MCF 10A (cell line): ENCODE measurements at regions of chr3 and their contacts with region 1.

Region 1: DNA sequence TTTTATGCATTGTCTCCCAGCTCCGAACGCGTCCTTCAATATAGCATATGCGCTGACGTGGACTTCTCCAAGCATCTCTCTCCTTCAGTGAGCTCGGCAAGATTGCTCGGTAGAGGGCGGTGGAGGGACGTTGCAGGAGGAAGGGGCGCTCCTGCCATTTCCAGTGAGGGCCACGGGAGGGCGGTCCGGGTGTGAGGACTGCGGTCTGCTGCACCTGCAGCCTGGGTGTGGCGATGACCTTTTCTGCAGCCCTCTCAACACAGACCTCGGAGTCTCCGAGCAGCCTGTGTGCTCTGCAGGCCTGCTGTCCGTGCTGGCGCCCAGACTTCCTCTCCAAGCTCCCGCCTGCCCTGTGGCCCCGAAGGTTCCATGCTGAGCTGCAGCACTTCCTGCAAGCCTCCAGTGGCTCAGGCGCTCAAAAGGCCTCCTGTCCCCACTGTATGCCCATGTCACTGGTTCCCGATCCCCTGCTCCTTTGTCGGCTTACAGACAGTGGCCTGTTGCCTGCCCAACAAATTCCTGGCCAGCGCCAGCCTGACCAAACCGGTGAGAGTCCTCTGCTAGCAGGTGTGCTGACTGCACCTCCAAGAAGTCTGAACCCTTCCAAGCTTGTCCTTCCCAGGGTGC is 8.9 kb upstream of the RTP3 start:
- DNase-seq: peak; percentile 91
- H3K4me3 Mint-ChIP-seq: no peak overlapping the region
- H3K27ac Mint-ChIP-seq: no peak overlapping the region
- H3K4me1 Mint-ChIP-seq: peaks cover 19% of the 10 kb centered on the region
- H3K27me3 Mint-ChIP-seq: no peaks in the 10 kb centered on the region
- CTCF ChIP-seq: peak; percentile 99

Region 2: GRCh38 chr3:46478341-46478740 is 10.5 kb before region 1 on chr3:
- CTCF ChIA-PET with region 1: interaction called, 11 read pairs
- POLR2A ChIA-PET with region 1: no interaction called
- intact Hi-C with region 1: no loop called
- DNase-seq: no peak
- H3K4me3 Mint-ChIP-seq: no peak overlapping the region
- H3K27ac Mint-ChIP-seq: no peak overlapping the region
- H3K4me1 Mint-ChIP-seq: peaks cover 13% of the 10 kb centered on the region
- H3K27me3 Mint-ChIP-seq: peaks cover 56% of the 10 kb centered on the region
- CTCF ChIP-seq: no peak

Region 3: DNA sequence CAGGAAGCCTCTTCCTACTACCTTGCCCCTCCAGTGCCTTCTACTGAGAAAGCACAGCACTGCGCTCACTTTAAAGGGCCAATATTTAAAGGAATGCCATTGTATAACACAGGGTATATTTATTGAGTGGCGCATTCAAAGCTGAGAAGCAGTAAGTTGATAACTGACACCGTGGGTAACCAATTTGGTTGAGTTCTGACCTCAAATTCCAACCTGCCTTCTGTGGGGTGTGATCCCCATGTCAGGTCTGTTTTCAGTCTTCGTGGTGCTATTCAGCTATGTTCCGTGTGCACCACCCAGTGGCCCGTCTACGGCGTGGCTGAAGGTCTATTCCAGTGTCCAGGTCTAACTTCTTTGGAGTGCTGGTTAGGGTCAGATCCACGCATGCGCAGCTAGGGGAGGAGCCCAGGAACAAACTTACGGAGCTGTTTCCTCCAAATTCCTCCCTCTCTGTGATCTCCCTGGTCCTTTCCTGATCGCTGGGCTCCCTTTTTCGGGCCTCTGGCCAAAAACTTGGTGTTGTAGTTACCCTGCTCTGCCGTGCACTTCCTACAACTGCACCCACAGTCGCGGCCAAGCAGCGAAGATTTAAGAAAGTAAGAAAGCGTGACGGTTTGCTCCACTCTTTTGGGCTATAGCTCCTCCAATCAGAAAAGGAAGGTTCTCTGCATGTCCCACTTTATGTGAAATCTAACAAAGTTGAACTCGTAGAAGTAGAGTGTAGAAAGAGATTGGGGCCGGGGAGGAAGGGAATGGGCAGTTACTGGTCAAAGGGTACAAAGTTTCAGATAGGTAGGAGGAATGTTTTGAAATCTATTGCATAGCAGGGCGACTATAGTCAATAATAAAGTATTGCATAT is 69.6 kb after region 1 on chr3:
- CTCF ChIA-PET with region 1: interaction called, 71 read pairs
- POLR2A ChIA-PET with region 1: interaction called, 10 read pairs
- intact Hi-C with region 1: loop called (anchors 1 kb)
- DNase-seq: peak; percentile 84
- H3K4me3 Mint-ChIP-seq: no peak overlapping the region
- H3K27ac Mint-ChIP-seq: peak overlapping the region; percentile 88
- H3K4me1 Mint-ChIP-seq: peaks cover 16% of the 10 kb centered on the region
- H3K27me3 Mint-ChIP-seq: no peaks in the 10 kb centered on the region
- CTCF ChIP-seq: peak; percentile 83

Region 4: DNA sequence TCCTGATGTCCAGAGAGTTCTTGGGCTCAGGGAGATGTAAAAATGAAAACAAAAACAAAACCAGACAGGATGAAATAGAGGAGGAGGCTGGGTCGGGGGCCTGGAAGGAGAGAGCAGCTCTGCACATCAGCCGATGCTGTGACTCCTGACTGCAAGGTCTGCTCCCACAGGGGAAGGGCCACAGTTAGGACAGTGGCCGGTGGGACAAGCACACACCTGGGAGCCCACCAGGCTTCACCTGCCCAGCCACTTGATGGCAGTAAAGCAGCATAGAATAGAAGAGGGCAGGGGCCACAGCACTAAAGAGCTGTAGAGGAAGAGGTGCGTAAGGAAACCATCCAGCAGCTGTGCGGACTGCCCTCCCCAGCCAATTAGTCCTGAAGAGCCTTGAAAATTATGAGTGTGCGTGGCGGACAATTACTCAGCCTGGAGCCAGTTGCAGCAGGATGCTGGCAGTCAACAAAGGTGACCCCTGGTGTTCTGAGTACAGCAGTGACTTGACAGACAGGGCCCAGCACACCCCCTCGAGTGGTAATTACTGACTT is 174.8 kb after region 1 on chr3:
- CTCF ChIA-PET with region 1: interaction called, 42 read pairs
- POLR2A ChIA-PET with region 1: interaction called, 4 read pairs
- intact Hi-C with region 1: no loop called
- DNase-seq: peak; percentile 30
- H3K4me3 Mint-ChIP-seq: no peak overlapping the region
- H3K27ac Mint-ChIP-seq: no peak overlapping the region
- H3K4me1 Mint-ChIP-seq: peaks cover 33% of the 10 kb centered on the region
- H3K27me3 Mint-ChIP-seq: no peaks in the 10 kb centered on the region
- CTCF ChIP-seq: peak; percentile 19

Region 5: DNA sequence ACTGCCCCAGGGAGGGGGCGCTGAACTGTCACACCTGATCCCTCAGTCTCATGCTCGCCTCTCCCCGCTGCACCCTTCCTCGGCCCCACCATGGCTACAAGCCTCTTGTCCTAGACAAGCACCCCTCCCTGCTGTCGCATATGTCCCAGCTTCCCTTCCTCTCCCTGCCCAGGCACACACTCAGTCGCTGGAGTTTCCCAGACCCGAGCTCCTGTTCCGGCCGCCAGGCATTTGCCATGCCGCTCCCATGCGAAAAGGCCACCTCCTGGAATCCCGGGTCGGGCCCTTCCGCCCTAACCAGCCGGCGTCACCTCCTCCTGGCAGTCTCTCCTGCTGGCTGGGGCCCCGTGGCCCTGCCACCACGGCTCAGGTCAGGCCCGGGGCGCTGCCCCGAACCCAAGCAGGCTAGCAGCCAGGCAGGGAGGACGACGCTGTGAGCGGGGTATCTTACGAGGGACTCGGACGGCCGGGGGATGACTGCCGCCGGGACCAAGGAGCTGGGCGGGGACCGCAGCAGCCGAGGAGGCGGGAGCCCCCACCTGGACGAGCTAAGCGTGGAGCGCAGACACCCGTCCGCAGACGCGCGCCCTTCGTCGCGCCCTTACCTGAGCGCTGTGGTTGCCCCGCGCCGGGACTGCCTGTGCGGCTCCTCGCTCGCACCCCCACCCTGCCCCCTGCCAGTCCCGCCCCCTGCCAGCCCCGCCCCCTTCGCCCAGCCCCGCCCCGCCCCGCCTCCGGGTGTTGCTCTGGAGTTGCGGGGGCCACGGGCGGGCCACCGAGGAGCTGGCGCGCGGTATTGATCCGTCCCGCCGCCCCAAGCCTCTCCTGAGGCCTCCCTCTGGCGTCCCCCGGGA is 204.4 kb after region 1 on chr3 and contains the start of gene ALS2CL:
- CTCF ChIA-PET with region 1: interaction called, 18 read pairs
- POLR2A ChIA-PET with region 1: interaction called, 12 read pairs
- intact Hi-C with region 1: loop called (anchors 1 kb)
- DNase-seq: peak; percentile 64
- H3K4me3 Mint-ChIP-seq: peak within 1 kb of the TSS; percentile 84
- H3K27ac Mint-ChIP-seq: peak within 1 kb of the TSS; percentile 94
- H3K4me1 Mint-ChIP-seq: peaks cover 49% of the 10 kb centered on the region
- H3K27me3 Mint-ChIP-seq: no peaks in the 10 kb centered on the region
- CTCF ChIP-seq: no peak
- total RNA-seq, gene ALS2CL: 93.6 and 95.5 TPM in 2 replicates